ENCODE measurements at regions of chr7 and their contacts with region 1.

Region 1: DNA sequence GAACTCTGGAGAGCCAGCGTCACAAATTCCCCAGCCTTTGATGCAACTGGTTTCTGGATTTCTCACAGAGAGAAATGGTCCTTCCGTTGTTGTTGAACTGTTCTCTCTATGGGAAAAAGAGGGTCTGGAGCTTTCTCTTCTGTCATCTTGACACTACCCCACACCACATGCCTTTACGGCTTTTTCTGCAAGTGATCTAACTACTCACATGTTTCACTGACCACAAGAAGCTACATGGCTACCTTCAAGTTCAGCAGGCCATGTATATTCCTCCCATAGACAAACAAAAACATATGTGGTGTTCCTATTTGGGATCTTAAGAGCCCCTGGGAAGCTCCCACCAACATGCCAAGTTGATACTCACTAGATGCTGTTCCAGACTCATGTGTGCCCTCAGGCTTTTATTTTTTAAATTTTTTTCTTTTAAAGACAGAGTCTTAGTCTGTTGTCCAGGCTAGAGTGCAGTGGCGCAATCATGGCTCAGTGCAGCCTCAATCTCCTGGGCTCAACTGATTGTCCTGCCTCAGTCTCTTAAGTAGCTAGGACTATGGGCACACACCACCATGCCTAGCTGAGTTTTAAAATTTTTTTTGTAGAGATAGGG is 72.0 kb downstream of the RNF216 start:
- DNase-seq: no peak
- H3K4me3 ChIP-seq: no peak overlapping the region
- H3K27ac ChIP-seq: peak overlapping the region; percentile 53 to 71
- H3K4me1 ChIP-seq: peaks cover 0 to 15% (median 8%) of the 10 kb centered on the region in 4 donors
- H3K27me3 ChIP-seq: no peaks in the 10 kb centered on the region
- CTCF ChIP-seq: no peak

Region 2: DNA sequence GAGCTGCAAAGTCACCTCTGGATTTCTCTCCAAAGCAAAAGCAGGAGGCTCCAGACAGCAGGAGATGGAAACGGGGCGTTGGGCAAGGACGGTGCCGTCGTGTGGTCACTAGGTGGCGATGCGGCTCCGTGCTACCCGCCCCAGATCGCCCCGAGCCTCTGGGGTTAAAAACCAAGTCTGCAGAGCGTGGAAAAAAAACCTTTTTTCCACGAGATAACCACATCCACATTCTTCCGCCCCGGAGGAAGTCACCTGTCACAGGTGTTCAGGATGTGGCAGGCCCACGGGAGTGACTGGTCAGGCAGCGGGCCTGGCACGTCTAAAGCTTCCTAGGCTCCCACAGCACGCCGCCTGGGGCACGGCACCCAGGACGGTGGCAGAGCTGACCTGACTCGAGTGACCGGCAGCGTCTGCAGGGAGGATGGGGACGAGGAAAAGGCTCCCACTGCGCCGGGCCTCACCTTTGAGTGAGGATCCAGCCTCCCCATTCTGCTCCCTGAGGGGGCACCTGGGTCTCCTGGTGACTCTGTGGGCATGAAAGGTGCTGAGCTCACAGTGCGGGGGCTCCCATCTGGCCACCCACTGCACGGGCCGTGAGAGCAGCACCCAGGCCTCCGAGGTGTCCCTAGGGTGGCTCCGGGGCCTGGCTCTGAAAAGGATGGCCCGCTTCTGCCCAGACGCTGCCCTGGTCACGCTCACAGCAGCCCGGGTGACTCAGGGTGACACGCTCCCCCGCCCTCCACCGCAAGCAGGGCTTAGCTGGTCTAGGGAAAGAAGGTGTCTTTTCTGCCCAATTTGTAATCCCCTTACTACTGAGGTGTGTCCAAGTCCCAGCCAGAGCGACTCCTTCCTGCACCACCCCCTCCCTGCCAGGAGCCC is 214.5 kb before region 1 on chr7:
- intact Hi-C with region 1: loop called (anchors 5 kb)
- DNase-seq: peak; percentile 65 to 87
- H3K4me3 ChIP-seq: peak overlapping the region; percentile 47 to 49
- H3K27ac ChIP-seq: peak overlapping the region; percentile 86 to 87
- H3K4me1 ChIP-seq: peaks cover 0 to 27% (median 21%) of the 10 kb centered on the region in 4 donors
- H3K27me3 ChIP-seq: no peaks in the 10 kb centered on the region
- CTCF ChIP-seq: peak; percentile 95

Region 3: GRCh38 chr7:5665094-5666025 is 44.1 kb before region 1 on chr7:
- intact Hi-C with region 1: loop called (anchors 5 kb)
- DNase-seq: peak; percentile 78 to 82
- H3K4me3 ChIP-seq: no peak overlapping the region
- H3K27ac ChIP-seq: peak overlapping the region in 1 of 2 donors; percentile 32
- H3K4me1 ChIP-seq: peaks cover 0 to 18% (median 0%) of the 10 kb centered on the region in 4 donors
- H3K27me3 ChIP-seq: no peaks in the 10 kb centered on the region
- CTCF ChIP-seq: peak; percentile 84 to 94

Region 4: GRCh38 chr7:6460303-6460702 is 750.9 kb after region 1 on chr7:
- intact Hi-C with region 1: no loop called
- DNase-seq: no peak
- H3K4me3 ChIP-seq: no peak overlapping the region
- H3K27ac ChIP-seq: no peak overlapping the region
- H3K4me1 ChIP-seq: peaks cover 0 to 4% (median 0%) of the 10 kb centered on the region in 4 donors
- H3K27me3 ChIP-seq: no peaks in the 10 kb centered on the region
- CTCF ChIP-seq: no peak